Left cardiac atrium (tissue), 4 donors: ENCODE measurements at regions of chr6 and their contacts with region 1.

Region 1: GRCh38 chr6:111997078-111997852 is 56.6 kb upstream of the CCN6 start:
- DNase-seq: peak; percentile 86
- ATAC-seq: peak; percentile 94

Region 2: DNA sequence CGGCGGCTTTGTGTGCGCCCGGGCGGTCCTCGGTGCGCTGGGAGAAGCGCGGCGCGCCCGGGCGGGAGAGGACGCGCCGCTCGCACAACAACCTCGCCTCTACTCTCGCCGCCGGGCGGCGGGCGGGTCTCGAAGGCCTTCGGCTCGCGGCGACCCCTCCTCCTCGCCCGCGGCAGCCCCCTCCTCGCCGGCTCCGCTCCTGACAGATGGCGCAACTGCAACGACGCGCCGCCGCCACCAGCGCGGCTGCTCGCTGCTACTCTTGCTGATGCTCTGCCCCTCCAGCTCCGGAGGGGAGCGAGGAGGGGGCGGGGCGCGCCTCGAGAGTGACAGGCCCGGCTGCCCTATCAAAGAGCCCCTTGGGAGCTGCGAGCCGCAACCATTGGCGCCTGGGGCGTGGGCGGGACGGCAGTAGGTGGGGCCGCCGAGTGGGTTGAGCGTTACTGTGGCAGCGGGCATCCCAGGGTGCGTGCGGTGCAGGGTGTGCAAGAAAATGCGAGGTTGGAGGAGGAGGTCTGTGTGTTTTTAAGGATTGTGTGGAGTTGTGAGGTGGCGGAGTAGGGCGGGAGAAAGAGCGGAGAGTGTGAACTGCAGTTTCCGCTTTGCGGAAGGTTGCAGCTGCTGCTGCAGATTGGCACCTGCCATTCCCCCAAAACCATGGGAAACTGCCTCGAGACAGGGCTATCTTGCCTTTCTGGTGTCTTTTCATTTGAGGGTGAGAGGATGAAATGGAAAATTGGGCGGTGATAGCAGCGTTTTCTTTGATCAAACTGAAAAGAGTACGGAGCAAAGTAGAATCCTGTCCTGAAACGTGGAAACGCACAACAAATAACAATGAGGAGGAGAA is 123.9 kb before region 1 on chr6 and contains the start of gene FYN:
- intact Hi-C with region 1: loop called (anchors 10 kb)
- DNase-seq: peak; percentile 99
- ATAC-seq: peak; percentile 99
- total RNA-seq, gene FYN: 60.4 to 75.8 TPM

Region 3: GRCh38 chr6:112043032-112044007 is 46.1 kb after region 1 on chr6:
- intact Hi-C with region 1: loop called in 1 of 2 experiments (anchors 5 kb)
- DNase-seq: peak; percentile 93
- ATAC-seq: peak; percentile 94 to 96